ENCODE measurements at regions of chr5 and their contacts with region 1.

Region 1: DNA sequence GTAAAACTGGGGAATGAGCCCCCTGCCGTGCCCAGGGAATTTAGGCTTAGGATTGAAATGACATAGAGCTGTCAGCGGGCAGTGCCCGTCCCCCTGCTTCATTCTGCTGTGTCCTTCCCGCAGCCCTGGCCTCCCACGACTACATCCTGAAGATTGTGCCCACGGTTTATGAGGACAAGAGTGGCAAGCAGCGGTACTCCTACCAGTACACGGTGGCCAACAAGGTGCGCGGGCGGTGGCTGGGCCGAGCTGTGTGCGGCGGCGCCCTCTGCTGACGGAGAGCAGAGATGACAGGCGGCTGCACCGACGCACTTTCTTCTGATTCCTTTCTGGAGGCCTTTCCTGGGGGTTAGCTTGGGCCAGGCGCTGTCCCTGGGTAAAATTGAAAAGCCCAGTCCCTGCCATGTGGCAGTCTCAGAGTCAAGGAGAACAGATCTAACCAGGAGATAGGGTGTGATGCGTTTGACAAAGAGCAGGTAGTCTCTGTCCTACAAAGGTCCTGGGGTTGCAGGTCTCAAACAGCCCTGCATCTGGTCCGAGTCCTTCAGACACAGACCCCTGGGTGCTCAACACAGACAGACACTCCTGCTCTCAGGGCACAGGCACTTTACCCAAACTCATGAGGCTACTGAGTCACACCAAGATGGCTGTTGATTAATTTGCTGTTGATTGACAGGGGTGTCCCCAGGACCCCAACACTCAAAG is 26.8 kb upstream of the RPL26L1 start:
- DNase-seq: peak; percentile 67 to 79
- ATAC-seq: peak; percentile 77 to 91 (median 85)
- H3K4me3 ChIP-seq: no peak overlapping the region
- H3K27ac ChIP-seq: peak overlapping the region in 9 of 10 donors; percentile 44 to 81 (median 74)
- H3K4me1 ChIP-seq: peaks cover 13 to 28% (median 21%) of the 10 kb centered on the region in 9 donors
- H3K27me3 ChIP-seq: no peaks in the 10 kb centered on the region
- CTCF ChIP-seq: peak; percentile 94 to 98 (median 97)

Region 2: DNA sequence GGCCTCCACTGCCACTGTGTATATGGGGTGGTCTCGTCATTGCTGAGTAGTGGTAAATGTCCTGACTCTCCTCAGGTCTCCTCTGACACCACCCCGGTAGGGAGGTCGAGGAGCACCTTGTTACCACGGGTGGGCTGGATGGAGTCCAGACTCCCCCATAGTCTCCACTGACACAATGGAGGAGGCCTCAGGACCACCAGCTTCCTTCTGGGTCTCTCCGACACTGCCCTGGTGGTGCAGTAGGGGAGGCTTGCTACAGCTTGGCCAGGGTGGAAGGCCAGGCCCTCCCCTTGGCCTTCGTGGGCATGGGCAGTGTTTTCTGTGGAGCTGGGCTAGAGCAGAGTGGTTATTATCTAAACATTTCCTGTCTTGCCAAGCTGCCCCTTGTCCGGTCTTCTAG is 462.8 kb before region 1 on chr5:
- intact Hi-C with region 1: loop called in 4 of 10 experiments (anchors 5 to 10 kb)
- DNase-seq: no peak
- ATAC-seq: no peak
- H3K4me3 ChIP-seq: no peak overlapping the region
- H3K27ac ChIP-seq: no peak overlapping the region
- H3K4me1 ChIP-seq: no peaks in the 10 kb centered on the region
- H3K27me3 ChIP-seq: no peaks in the 10 kb centered on the region
- CTCF ChIP-seq: no peak

Region 3: GRCh38 chr5:172479044-172479783 is 453.3 kb before region 1 on chr5:
- intact Hi-C with region 1: loop called in 3 of 10 experiments (anchors 5 to 10 kb)
- DNase-seq: peak; percentile 83 to 92
- ATAC-seq: peak; percentile 94 to 98 (median 96)
- H3K4me3 ChIP-seq: peak overlapping the region in 5 of 10 donors; percentile 21 to 41 (median 28)
- H3K27ac ChIP-seq: peak overlapping the region; percentile 17 to 87 (median 78)
- H3K4me1 ChIP-seq: peaks cover 5 to 43% (median 15%) of the 10 kb centered on the region in 9 donors
- H3K27me3 ChIP-seq: no peaks in the 10 kb centered on the region
- CTCF ChIP-seq: peak; percentile 81 to 95 (median 86)

Region 4: GRCh38 chr5:172777881-172778814 is 154.3 kb before region 1 on chr5:
- intact Hi-C with region 1: loop called in 7 of 10 experiments (anchors 2 to 10 kb)
- DNase-seq: no peak
- ATAC-seq: peak in 2 of 8 donors; percentile 16 to 45
- H3K4me3 ChIP-seq: peak overlapping the region in 1 of 10 donors; percentile 11
- H3K27ac ChIP-seq: peak overlapping the region in 8 of 10 donors; percentile 37 to 100 (median 72)
- H3K4me1 ChIP-seq: peaks cover 0 to 71% (median 4%) of the 10 kb centered on the region in 9 donors
- H3K27me3 ChIP-seq: no peaks in the 10 kb centered on the region
- CTCF ChIP-seq: no peak

Measured in heart right ventricle (tissue), 16 donors.